CD4-positive, alpha-beta T cell (primary cell): ENCODE measurements at regions of chr12 and their contacts with region 1.

Region 1: DNA sequence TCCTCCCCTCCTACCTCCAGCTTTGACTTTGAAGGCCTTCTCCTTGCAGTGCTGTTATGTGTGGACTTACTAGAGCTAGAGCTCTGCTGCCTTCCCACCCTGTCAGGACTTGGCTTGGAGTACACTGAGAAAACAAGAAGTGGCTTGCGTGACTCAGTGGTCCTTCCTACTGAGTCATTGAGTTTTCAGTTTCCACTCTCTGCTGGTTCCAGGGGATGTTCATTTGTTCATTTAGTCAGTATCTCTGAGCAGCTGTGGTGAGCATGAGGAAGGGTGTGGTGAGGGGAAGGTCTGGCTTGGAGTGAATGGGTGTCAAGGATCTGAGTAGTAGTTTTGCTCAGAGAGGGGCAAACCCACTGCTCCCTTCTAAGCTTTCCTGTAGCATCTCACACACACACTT is 17.2 kb upstream of the ELK3 start:
- DNase-seq: peak in 10 of 14 experiments; percentile 2 to 73 (median 32)
- ATAC-seq: peak; percentile 77
- H3K4me3 ChIP-seq: no peak overlapping the region
- H3K4me3 Mint-ChIP-seq: no peak overlapping the region
- H3K27ac ChIP-seq: peak overlapping the region in 1 of 2 donors; percentile 13
- H3K27ac Mint-ChIP-seq: peak overlapping the region; percentile 75
- H3K4me1 ChIP-seq: peaks cover 13% of the 10 kb centered on the region
- H3K4me1 Mint-ChIP-seq: peaks cover 11% of the 10 kb centered on the region
- H3K27me3 ChIP-seq: no peaks in the 10 kb centered on the region
- H3K27me3 Mint-ChIP-seq: no peaks in the 10 kb centered on the region
- CTCF ChIP-seq: no peak

Region 2: GRCh38 chr12:96208801-96209549 is 32.0 kb after region 1 on chr12:
- CTCF ChIA-PET with region 1: interaction called, 3 read pairs
- POLR2A ChIA-PET with region 1: interaction called, 4 read pairs
- intact Hi-C with region 1: loop called in 1 of 2 experiments (anchors 5 kb)
- DNase-seq: peak in 2 of 14 experiments; percentile 23 to 30
- ATAC-seq: no peak
- H3K4me3 ChIP-seq: peak overlapping the region; percentile 3
- H3K4me3 Mint-ChIP-seq: peak overlapping the region; percentile 87
- H3K27ac ChIP-seq: peak overlapping the region in 1 of 2 donors; percentile 46
- H3K27ac Mint-ChIP-seq: peak overlapping the region; percentile 82
- H3K4me1 ChIP-seq: peaks cover 87% of the 10 kb centered on the region
- H3K4me1 Mint-ChIP-seq: peaks cover 97% of the 10 kb centered on the region
- H3K27me3 ChIP-seq: no peaks in the 10 kb centered on the region
- H3K27me3 Mint-ChIP-seq: no peaks in the 10 kb centered on the region
- CTCF ChIP-seq: no peak